MCF 10A (cell line): ENCODE measurements at regions of chr11 and their contacts with region 1.

Region 1: DNA sequence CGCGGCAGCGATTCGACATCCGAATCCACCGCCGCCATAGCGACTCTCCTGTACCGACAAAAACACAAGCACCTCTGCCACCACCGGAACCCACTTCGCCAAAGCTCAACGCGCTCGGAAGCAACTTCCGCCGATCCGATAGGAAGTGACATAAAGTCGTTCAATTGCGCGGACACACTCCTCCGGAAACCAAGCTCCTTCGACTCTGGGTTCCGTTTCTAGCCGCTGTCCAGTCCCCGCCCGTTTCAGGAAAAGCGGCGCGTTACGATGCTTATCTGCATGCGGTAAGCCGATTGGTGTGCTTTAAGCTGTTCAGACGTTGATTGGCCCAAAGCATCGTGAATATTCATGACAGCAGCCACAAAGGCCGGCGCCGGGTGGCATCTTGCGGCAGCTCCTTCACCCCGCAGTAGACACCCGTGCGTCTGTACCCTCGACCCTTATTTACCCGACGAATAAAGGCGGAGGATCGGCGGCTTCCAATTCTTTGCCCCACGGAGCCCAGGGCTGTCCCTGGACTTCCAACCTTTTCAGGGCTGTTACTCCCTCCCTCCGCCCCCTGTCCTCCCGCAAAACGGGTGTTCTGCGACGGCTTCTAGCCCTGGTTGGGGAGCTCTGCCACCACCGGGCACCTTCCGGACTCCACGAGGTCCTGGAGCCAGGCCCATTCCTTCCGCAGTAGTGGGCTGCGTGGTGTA is at the start of gene TUT1:
- DNase-seq: peak; percentile 99
- H3K4me3 Mint-ChIP-seq: peak within 1 kb of the TSS; percentile 96
- H3K27ac Mint-ChIP-seq: peak within 1 kb of the TSS; percentile 95
- H3K4me1 Mint-ChIP-seq: peaks cover 12% of the 10 kb centered on the region
- H3K27me3 Mint-ChIP-seq: no peaks in the 10 kb centered on the region
- CTCF ChIP-seq: no peak
- total RNA-seq, gene TUT1: 26.0 and 28.3 TPM in 2 replicates

Region 2: GRCh38 chr11:62573592-62574362 is 17.8 kb before region 1 on chr11 and contains the start of gene EEF1G:
- CTCF ChIA-PET with region 1: interaction called, 4 read pairs
- POLR2A ChIA-PET with region 1: interaction called, 164 read pairs
- intact Hi-C with region 1: loop called (anchors 1 kb)
- DNase-seq: peak; percentile 100
- H3K4me3 Mint-ChIP-seq: peak within 1 kb of the TSS; percentile 100
- H3K27ac Mint-ChIP-seq: peak within 1 kb of the TSS; percentile 100
- H3K4me1 Mint-ChIP-seq: peaks cover 30% of the 10 kb centered on the region
- H3K27me3 Mint-ChIP-seq: no peaks in the 10 kb centered on the region
- CTCF ChIP-seq: no peak
- total RNA-seq, gene EEF1G: 1,510 and 1,855 TPM in 2 replicates

Region 3: GRCh38 chr11:62621567-62622470 is 30.2 kb after region 1 on chr11 and contains the start of gene B3GAT3:
- CTCF ChIA-PET with region 1: interaction called, 17 read pairs
- POLR2A ChIA-PET with region 1: interaction called, 149 read pairs
- intact Hi-C with region 1: loop called (anchors 2 kb)
- DNase-seq: peak; percentile 98
- H3K4me3 Mint-ChIP-seq: peak within 1 kb of the TSS; percentile 97
- H3K27ac Mint-ChIP-seq: peak within 1 kb of the TSS; percentile 92
- H3K4me1 Mint-ChIP-seq: peaks cover 12% of the 10 kb centered on the region
- H3K27me3 Mint-ChIP-seq: no peaks in the 10 kb centered on the region
- CTCF ChIP-seq: no peak
- total RNA-seq, gene B3GAT3: 40.1 and 42.4 TPM in 2 replicates

Region 4: DNA sequence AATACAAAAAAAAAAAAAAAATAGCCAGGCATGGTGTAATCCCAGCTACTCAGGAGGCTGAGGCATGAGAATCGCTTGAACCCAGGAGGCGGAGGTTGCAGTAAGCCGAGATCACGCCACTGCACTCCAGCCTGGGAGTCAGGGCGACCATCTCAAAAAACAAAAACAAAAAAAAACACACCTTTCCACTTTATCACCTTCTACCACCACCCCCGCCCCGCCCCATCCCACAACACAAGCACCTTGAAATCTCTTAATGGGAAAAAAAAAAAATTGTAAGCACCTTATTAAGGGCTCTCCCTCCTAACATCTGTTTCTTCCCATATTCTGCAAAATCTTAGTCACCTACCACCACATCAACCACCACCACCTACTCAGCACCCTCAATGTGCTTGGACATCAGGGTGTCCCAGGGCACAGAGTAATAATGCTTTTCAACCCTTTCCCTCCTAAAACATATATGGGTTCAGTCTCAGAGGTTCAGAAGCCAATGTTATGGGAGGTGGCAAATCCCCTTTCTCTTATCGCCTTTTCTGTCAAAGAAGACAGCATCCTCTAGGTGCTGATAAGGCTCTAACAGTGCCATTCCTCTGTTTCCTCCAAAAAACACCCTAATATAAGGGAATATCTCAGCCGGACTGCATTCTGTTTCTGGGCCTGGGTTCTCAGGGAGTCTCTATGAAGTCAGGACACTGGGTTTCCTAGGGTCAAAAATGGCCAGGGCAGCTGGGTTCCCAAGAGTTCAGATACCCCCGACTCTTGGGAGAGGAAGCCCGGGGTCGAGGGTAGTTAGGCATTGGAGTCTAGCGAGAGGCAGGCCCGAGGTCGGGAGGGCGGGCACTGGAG is 60.8 kb after region 1 on chr11:
- CTCF ChIA-PET with region 1: interaction called, 6 read pairs
- POLR2A ChIA-PET with region 1: interaction called, 33 read pairs
- intact Hi-C with region 1: no loop called
- DNase-seq: no peak
- H3K4me3 Mint-ChIP-seq: peak overlapping the region; percentile 93
- H3K27ac Mint-ChIP-seq: peak overlapping the region; percentile 96
- H3K4me1 Mint-ChIP-seq: peaks cover 14% of the 10 kb centered on the region
- H3K27me3 Mint-ChIP-seq: no peaks in the 10 kb centered on the region
- CTCF ChIP-seq: no peak

Region 5: DNA sequence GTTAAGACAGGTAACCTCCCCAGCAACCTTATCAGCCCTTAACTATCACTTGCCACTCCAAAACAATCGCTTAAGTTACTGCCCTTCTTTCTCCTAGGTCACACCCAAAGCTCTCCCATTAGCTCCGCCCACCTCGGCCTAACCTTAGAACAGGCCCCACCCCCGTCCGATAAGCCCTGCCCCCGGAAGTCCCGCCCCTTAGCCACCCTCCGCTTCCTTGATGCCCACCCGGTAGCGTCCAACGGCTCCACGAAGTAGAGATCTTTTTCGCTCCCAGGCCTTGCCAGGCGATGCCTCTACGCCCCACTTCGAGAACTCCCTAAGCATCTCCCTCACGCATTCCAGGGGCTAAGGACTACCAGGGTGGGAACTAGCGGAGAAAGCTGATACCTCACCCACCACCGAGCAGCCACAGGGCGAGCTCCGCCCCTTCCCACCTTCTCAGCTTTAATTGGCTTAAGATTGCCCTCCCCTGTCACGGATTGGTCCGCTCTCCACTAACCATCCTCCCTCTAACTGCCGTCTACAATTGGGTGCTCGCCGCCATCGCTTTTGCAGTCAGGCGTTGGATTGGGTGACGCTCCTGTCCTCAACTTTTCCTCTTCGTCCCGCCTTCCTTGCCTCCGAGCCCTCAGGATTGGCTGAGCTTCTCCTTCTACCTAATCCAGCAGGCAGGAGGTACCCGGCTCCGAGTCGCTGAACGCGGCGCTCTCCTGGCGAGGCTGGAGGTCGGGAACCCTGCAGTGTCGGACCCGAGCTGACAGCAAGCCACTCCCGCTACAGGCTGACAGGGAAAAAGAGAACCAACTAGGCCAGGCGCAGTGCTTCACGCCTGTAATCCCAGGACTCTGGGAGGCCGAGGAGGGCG is 162.4 kb after region 1 on chr11 and contains the start of gene ZBTB3:
- CTCF ChIA-PET with region 1: no interaction called
- POLR2A ChIA-PET with region 1: interaction called, 10 read pairs
- intact Hi-C with region 1: no loop called
- DNase-seq: peak; percentile 100
- H3K4me3 Mint-ChIP-seq: peak within 1 kb of the TSS; percentile 98
- H3K27ac Mint-ChIP-seq: peak within 1 kb of the TSS; percentile 96
- H3K4me1 Mint-ChIP-seq: peaks cover 3% of the 10 kb centered on the region
- H3K27me3 Mint-ChIP-seq: no peaks in the 10 kb centered on the region
- CTCF ChIP-seq: no peak
- total RNA-seq, gene ZBTB3: 7.1 and 11.6 TPM in 2 replicates